CD14-positive monocyte (primary cell): ENCODE measurements at regions of chr3 and their contacts with region 1.

Region 1: DNA sequence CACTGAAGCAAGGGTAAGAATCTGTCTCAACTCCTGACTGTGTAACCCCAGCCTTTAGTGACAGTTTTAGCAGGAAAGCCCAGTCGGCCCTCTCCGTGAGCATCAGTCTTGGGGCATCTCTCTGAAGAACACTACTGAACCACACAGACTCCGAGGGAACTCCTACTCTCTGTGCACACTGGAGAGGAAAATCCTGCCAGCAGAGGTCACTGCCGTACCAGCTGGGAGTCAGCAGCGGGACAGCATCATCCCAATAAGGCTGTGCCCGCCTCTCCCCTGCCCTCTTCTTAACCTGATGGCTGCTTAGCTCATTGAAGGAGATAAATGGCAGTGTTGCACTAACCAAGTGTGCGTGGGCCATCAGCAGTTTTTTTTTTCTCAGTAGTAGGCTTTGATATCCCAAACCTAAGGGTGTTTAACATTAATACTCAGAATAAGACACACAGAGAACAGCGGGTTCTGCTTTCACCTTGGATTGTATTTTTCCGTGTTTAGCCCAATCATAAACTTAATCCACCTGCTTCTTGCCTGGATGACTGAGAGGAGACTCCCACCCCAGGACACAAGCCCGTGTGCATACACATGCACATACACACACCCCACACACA is 26.6 kb upstream of the RASA2 start:
- DNase-seq: peak; percentile 67 to 75 (median 73)
- H3K4me3 ChIP-seq: no peak overlapping the region
- H3K4me3 Mint-ChIP-seq: no peak overlapping the region
- H3K27ac ChIP-seq: no peak overlapping the region
- H3K27ac Mint-ChIP-seq: peak overlapping the region in 1 of 7 donors; percentile 41
- H3K4me1 ChIP-seq: no peaks in the 10 kb centered on the region
- H3K4me1 Mint-ChIP-seq: peaks cover 6% of the 10 kb centered on the region
- H3K27me3 ChIP-seq: no peaks in the 10 kb centered on the region
- H3K27me3 Mint-ChIP-seq: peaks cover 0 to 2% (median 1%) of the 10 kb centered on the region in 3 donors
- CTCF ChIP-seq: peak; percentile 89

Region 2: GRCh38 chr3:141507392-141508066 is 47.3 kb after region 1 on chr3:
- intact Hi-C with region 1: loop called in 1 of 2 experiments (anchors 5 kb)
- DNase-seq: no peak
- H3K4me3 ChIP-seq: no peak overlapping the region
- H3K4me3 Mint-ChIP-seq: no peak overlapping the region
- H3K27ac ChIP-seq: no peak overlapping the region
- H3K27ac Mint-ChIP-seq: no peak overlapping the region
- H3K4me1 ChIP-seq: peaks cover 24% of the 10 kb centered on the region in 2 donors
- H3K4me1 Mint-ChIP-seq: peaks cover 30% of the 10 kb centered on the region
- H3K27me3 ChIP-seq: no peaks in the 10 kb centered on the region
- H3K27me3 Mint-ChIP-seq: no peaks in the 10 kb centered on the region
- CTCF ChIP-seq: no peak

Region 3: GRCh38 chr3:141597931-141598330 is 137.7 kb after region 1 on chr3:
- intact Hi-C with region 1: no loop called
- DNase-seq: no peak
- H3K4me3 ChIP-seq: no peak overlapping the region
- H3K4me3 Mint-ChIP-seq: no peak overlapping the region
- H3K27ac ChIP-seq: no peak overlapping the region
- H3K27ac Mint-ChIP-seq: peak overlapping the region in 1 of 7 donors; percentile 11
- H3K4me1 ChIP-seq: no peaks in the 10 kb centered on the region
- H3K4me1 Mint-ChIP-seq: no peaks in the 10 kb centered on the region
- H3K27me3 ChIP-seq: no peaks in the 10 kb centered on the region
- H3K27me3 Mint-ChIP-seq: no peaks in the 10 kb centered on the region
- CTCF ChIP-seq: no peak